Caco-2 (cell line): ENCODE measurements at regions of chr5 and their contacts with region 1.

Region 1: DNA sequence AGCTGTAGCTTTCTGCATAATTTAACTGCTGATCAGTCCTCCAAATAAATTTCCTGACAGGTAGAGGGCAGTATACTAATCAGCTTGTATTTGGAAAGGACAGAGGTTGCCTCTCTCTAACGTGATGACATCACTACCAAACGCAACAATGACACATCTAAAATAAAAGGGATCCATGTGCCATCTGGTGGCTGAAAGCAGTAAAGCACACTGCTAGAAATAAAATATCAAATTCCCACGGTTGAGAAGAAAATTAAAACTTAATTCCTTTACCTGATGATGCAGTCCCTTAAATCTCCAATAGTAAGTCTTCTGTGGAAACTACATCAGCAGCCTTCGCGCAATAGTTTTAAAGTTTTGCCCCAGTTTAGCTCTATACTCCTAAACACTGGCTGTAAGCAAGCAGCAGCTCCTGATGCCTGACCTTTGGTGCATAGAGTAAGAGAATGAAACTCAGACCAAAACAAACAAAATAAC is 54.5 kb downstream of the DIAPH1 start:
- DNase-seq: peak; percentile 84 to 85
- H3K4me3 ChIP-seq: no peak overlapping the region
- H3K4me3 Mint-ChIP-seq: peak overlapping the region; percentile 48
- H3K27ac Mint-ChIP-seq: peak overlapping the region; percentile 90
- H3K4me1 ChIP-seq: peaks cover 6% of the 10 kb centered on the region; the same call in 1 of the 2 replicates
- H3K4me1 Mint-ChIP-seq: peaks cover 30% of the 10 kb centered on the region
- H3K27me3 ChIP-seq: no peaks in the 10 kb centered on the region
- H3K27me3 Mint-ChIP-seq: no peaks in the 10 kb centered on the region
- CTCF ChIP-seq: peak; percentile 86 to 88

Region 2: DNA sequence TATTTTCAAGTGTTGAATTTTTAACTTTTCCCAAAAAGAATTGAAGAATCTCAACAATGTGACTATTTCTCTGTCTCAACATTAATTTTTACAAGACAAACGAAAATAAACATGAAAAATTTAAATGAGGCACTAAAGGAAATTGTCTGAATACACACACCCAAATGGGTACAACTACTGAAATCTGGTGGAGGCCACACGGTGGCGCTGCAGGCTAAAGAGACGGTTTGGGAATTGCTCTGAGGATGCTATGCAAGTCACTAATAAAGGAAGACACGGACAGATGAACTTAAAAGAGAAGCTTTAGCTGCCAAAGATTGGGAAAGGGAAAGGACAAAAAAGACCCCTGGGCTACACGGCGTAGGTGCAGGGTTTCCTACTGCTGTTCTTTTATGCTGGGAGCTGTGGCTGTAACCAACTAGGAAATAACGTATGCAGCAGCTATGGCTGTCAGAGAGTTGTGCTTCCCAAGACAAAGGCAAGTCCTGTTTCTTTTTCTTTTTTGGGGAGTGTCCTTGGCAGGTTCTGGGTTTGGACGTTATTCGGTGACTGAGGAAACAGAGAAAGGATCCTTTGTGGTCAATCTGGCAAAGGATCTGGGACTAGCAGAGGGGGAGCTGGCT is 372.0 kb before region 1 on chr5 and contains the start of gene PCDHB10:
- CTCF ChIA-PET with region 1: no interaction called
- POLR2A ChIA-PET with region 1: no interaction called
- intact Hi-C with region 1: loop called (anchors 5 kb)
- DNase-seq: peak in 1 of 2 experiments; percentile 21
- H3K4me3 ChIP-seq: no peak within 1 kb of the TSS
- H3K4me3 Mint-ChIP-seq: peak within 1 kb of the TSS; percentile 40
- H3K27ac Mint-ChIP-seq: no peak within 1 kb of the TSS
- H3K4me1 ChIP-seq: no peaks in the 10 kb centered on the region
- H3K4me1 Mint-ChIP-seq: no peaks in the 10 kb centered on the region
- H3K27me3 ChIP-seq: no peaks in the 10 kb centered on the region
- H3K27me3 Mint-ChIP-seq: no peaks in the 10 kb centered on the region
- CTCF ChIP-seq: peak in 1 of 2 experiments; percentile 24
- total RNA-seq, gene PCDHB10: 0.09 TPM in 1 of 2 replicates, not detected in the other

Region 3: DNA sequence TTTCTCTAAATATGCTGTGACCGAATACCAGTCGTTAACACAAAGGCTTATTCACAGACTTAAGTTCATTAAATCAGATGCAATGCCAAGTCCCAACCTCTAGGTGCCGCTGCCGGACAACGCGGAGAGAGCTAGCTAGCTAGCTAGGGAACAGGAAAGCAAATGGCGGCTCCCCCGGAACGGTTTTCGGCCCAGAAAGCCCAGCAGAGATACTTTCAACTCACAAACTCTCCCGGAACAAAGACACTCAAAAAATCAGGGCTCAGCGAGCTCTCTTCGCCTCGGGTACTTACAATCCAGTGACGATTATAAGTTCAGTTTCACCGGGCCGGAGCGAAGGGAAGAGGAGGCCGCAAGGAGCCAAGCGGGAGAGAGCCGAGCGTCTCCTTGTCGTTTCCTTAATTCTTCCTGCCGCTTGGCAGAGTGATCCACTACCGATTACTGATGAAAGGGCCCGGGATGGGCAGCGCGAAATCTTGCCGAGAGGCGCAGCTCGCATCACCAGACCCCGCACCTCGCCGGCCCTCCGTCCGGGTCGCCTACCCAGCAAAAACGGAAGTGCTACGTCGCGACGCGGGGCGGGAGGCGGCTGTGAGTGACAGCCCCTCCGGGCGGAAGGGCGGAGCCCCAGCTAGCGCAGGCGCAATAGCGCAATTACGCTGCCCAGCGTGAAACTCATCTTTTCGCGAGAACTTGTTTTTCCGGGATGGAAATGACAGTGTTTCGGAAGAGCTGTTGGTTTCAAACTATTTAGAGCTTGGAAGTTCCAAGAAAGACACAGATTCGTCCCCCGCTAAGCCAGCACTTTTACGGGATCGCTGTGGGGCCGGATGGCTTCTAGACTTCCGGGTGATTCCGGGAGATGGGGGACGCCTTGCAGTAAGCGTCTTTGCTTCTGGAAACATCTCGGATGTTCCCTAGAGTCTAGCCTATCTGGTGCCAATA is 243.8 kb before region 1 on chr5 and contains the start of gene TAF7:
- CTCF ChIA-PET with region 1: interaction called, 13 read pairs
- POLR2A ChIA-PET with region 1: interaction called, 4 read pairs
- intact Hi-C with region 1: no loop called
- DNase-seq: peak; percentile 94 to 95
- H3K4me3 ChIP-seq: peak within 1 kb of the TSS; percentile 95
- H3K4me3 Mint-ChIP-seq: peak within 1 kb of the TSS; percentile 96
- H3K27ac Mint-ChIP-seq: peak within 1 kb of the TSS; percentile 100
- H3K4me1 ChIP-seq: peaks cover 5% of the 10 kb centered on the region; the same call in 1 of the 2 replicates
- H3K4me1 Mint-ChIP-seq: peaks cover 6% of the 10 kb centered on the region
- H3K27me3 ChIP-seq: no peaks in the 10 kb centered on the region
- H3K27me3 Mint-ChIP-seq: no peaks in the 10 kb centered on the region
- CTCF ChIP-seq: peak; percentile 87 to 93
- total RNA-seq, gene TAF7: 77.2 and 78.7 TPM in 2 replicates

Region 4: GRCh38 chr5:141359790-141360426 is 204.3 kb before region 1 on chr5 and contains the start of gene PCDHGB2:
- CTCF ChIA-PET with region 1: interaction called, 6 read pairs
- POLR2A ChIA-PET with region 1: no interaction called
- intact Hi-C with region 1: loop called (anchors 2 kb)
- DNase-seq: peak in 1 of 2 experiments; percentile 15
- H3K4me3 ChIP-seq: no peak within 1 kb of the TSS
- H3K4me3 Mint-ChIP-seq: peak within 1 kb of the TSS; percentile 36
- H3K27ac Mint-ChIP-seq: peak within 1 kb of the TSS; percentile 31
- H3K4me1 ChIP-seq: no peaks in the 10 kb centered on the region
- H3K4me1 Mint-ChIP-seq: no peaks in the 10 kb centered on the region
- H3K27me3 ChIP-seq: no peaks in the 10 kb centered on the region
- H3K27me3 Mint-ChIP-seq: no peaks in the 10 kb centered on the region
- CTCF ChIP-seq: peak; percentile 40 to 47
- total RNA-seq, gene PCDHGB2: 1.00 and 1.3 TPM in 2 replicates

Region 5: GRCh38 chr5:141412854-141413539 is 151.3 kb before region 1 on chr5 and contains the start of gene PCDHGA10:
- CTCF ChIA-PET with region 1: interaction called, 16 read pairs
- POLR2A ChIA-PET with region 1: no interaction called
- intact Hi-C with region 1: loop called (anchors 1 kb)
- DNase-seq: peak in 1 of 2 experiments; percentile 50
- H3K4me3 ChIP-seq: peak within 1 kb of the TSS; percentile 49
- H3K4me3 Mint-ChIP-seq: peak within 1 kb of the TSS; percentile 86
- H3K27ac Mint-ChIP-seq: no peak within 1 kb of the TSS
- H3K4me1 ChIP-seq: no peaks in the 10 kb centered on the region
- H3K4me1 Mint-ChIP-seq: no peaks in the 10 kb centered on the region
- H3K27me3 ChIP-seq: no peaks in the 10 kb centered on the region
- H3K27me3 Mint-ChIP-seq: no peaks in the 10 kb centered on the region
- CTCF ChIP-seq: peak; percentile 50 to 55
- total RNA-seq, gene PCDHGA10: 2.9 and 3.6 TPM in 2 replicates

Region 6: DNA sequence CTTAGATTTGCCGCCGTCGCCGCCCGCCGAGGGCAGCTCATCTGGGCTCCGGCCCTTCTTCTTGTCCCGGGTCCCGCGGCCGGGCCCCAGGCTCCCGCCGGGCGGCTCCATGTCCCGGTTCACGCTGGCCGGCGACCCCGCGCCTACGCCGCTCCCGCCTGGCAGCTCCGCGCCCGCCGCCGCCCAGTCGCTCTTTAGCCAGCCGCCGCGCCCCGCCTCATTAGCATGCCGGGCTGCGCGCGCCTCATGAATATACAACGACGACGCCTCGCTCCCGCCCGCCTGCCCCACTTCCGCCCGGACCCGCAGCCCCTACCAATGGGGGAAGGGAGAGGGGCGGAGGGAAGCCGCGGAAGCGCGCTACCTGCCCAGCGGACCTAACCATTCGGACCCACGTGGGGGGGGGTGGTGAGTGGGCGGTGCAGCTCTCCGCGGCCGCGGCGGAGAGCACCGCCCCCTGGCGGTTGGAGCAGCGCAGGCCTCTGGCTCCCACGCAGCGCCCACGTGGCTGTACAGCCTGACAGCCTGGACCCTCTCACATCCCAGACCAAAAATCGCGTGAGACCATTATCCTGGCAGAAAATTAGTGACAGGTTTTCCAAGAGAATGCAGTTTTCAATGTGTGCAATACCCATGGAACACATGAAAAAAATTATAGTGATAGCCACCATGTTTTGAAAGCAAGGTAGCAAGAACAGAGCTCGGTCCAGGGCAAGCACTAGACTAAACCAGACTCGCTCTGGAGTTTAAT is 54.7 kb after region 1 on chr5 and contains the start of gene DIAPH1:
- CTCF ChIA-PET with region 1: interaction called, 18 read pairs
- POLR2A ChIA-PET with region 1: no interaction called
- intact Hi-C with region 1: loop called (anchors 1 kb)
- DNase-seq: peak; percentile 98
- H3K4me3 ChIP-seq: peak within 1 kb of the TSS; percentile 87
- H3K4me3 Mint-ChIP-seq: peak within 1 kb of the TSS; percentile 89
- H3K27ac Mint-ChIP-seq: peak within 1 kb of the TSS; percentile 96
- H3K4me1 ChIP-seq: peaks cover 29% of the 10 kb centered on the region
- H3K4me1 Mint-ChIP-seq: peaks cover 13% of the 10 kb centered on the region
- H3K27me3 ChIP-seq: no peaks in the 10 kb centered on the region
- H3K27me3 Mint-ChIP-seq: no peaks in the 10 kb centered on the region
- CTCF ChIP-seq: peak; percentile 95 to 97
- total RNA-seq, gene DIAPH1: 161 and 167 TPM in 2 replicates

Region 7: GRCh38 chr5:141681695-141682641 is 117.7 kb after region 1 on chr5 and contains the start of gene ARAP3:
- CTCF ChIA-PET with region 1: no interaction called
- POLR2A ChIA-PET with region 1: no interaction called
- intact Hi-C with region 1: no loop called
- DNase-seq: peak; percentile 86
- H3K4me3 ChIP-seq: peak within 1 kb of the TSS; percentile 63
- H3K4me3 Mint-ChIP-seq: peak within 1 kb of the TSS; percentile 65
- H3K27ac Mint-ChIP-seq: peak within 1 kb of the TSS; percentile 12
- H3K4me1 ChIP-seq: peaks cover 15% of the 10 kb centered on the region
- H3K4me1 Mint-ChIP-seq: peaks cover 13% of the 10 kb centered on the region
- H3K27me3 ChIP-seq: no peaks in the 10 kb centered on the region
- H3K27me3 Mint-ChIP-seq: no peaks in the 10 kb centered on the region
- CTCF ChIP-seq: no peak
- total RNA-seq, gene ARAP3: 6.3 and 7.5 TPM in 2 replicates